ENCODE measurements at regions of chr7 and their contacts with region 1.

Region 1: GRCh38 chr7:137670199-137671071 is 176.3 kb downstream of the DGKI start:
- DNase-seq: peak; percentile 35
- ATAC-seq: peak; percentile 77
- H3K4me3 ChIP-seq: no peak overlapping the region
- H3K27ac ChIP-seq: no peak overlapping the region
- H3K4me1 ChIP-seq: 0 out of 2 replicates have a peak, but pooled peaks cover 2% of the 10 kb centered on the region
- H3K27me3 ChIP-seq: no peaks in the 10 kb centered on the region
- CTCF ChIP-seq: no peak
- EP300 ChIP-seq: no peak
- POLR2A ChIP-seq: no peak
- RAD21 ChIP-seq: peak; percentile 19; the same call in 1 of the 2 replicates

Region 2: DNA sequence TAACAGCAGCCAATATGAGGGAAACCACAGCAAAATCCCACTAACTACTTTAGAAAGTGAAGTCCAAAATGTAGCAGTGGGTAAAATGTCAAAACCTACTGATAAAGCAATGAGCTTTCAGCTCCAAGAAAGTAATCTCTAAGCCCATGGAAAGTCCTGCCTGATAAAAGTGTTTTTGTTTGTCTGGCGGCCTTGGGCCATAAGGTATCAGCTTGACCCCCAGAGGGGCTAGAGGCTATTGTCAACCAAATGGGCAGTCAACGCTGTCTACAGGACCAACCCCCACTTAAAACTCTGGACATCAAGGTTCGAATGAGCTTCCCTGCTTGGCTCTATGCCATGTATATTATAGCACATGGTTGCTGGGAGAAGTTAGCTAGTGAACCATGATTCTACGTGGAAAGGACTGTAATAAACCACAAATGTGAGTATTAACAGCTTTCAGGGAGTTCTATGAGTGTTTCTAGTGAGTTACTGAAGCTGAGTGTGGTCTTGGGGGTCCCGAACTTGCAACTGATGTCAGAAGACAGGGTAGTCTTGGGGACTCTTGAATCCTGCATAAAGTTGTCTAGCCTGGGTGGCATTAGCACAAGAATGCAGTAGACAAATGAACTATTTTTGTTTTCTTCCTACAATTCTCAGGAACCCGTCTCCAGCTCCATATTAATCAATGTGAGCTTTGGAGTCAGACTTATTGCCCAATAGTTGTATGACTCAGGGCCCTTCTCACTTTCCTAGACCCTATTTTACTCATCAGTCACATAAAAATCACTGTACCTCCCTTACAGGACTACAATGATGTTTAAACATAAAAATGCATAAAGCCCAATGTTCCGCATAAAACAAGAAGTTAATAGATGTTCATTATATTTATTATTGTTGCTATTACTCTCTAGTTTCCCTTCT is 11.5 kb after region 1 on chr7:
- CTCF ChIA-PET with region 1: interaction called, 5 read pairs
- POLR2A ChIA-PET with region 1: interaction called, 3 read pairs
- RAD21 ChIA-PET with region 1: interaction called, 4 read pairs
- SMC1A ChIA-PET with region 1: interaction called, 63 read pairs
- in situ Hi-C with region 1: no loop called
- intact Hi-C with region 1: no loop called
- DNase-seq: no peak
- ATAC-seq: no peak
- H3K4me3 ChIP-seq: no peak overlapping the region
- H3K27ac ChIP-seq: no peak overlapping the region
- H3K4me1 ChIP-seq: no peaks in the 10 kb centered on the region
- H3K27me3 ChIP-seq: no peaks in the 10 kb centered on the region
- CTCF ChIP-seq: no peak
- EP300 ChIP-seq: no peak
- POLR2A ChIP-seq: no peak
- RAD21 ChIP-seq: no peak

Region 3: DNA sequence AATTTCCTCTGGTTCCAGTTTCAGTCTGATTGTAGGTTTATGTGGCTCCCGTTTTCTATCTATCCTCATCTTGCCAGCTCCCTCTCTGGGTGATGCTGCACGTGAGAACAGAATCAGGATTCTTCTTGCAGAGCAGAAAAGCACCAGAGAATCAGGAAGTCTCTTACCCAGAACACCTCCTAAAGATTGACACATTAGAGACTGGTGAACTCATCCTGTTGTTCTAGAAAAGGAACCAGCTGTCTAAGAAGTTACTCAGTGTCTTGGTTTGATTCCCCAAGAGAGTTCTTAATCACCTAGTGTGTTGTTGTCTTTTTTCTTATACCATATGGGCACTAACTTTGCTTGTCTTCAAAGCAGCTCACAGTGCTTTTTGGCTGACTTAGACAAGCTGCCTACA is 24.0 kb after region 1 on chr7:
- CTCF ChIA-PET with region 1: interaction called, 10 read pairs
- POLR2A ChIA-PET with region 1: interaction called, 17 read pairs
- RAD21 ChIA-PET with region 1: interaction called, 30 read pairs
- SMC1A ChIA-PET with region 1: interaction called, 63 read pairs
- in situ Hi-C with region 1: no loop called
- intact Hi-C with region 1: no loop called
- DNase-seq: peak; percentile 17
- ATAC-seq: peak; percentile 91
- H3K4me3 ChIP-seq: no peak overlapping the region
- H3K27ac ChIP-seq: no peak overlapping the region
- H3K4me1 ChIP-seq: no peaks in the 10 kb centered on the region
- H3K27me3 ChIP-seq: no peaks in the 10 kb centered on the region
- CTCF ChIP-seq: no peak
- EP300 ChIP-seq: peak in 1 of 2 experiments; percentile 12; a peak in 1 of 4 replicates
- POLR2A ChIP-seq: no peak
- RAD21 ChIP-seq: no peak

Region 4: GRCh38 chr7:137742051-137742450 is 71.6 kb after region 1 on chr7:
- CTCF ChIA-PET with region 1: interaction called, 3 read pairs
- POLR2A ChIA-PET with region 1: interaction called, 3 read pairs
- RAD21 ChIA-PET with region 1: interaction called, 3 read pairs
- SMC1A ChIA-PET with region 1: interaction called, 19 read pairs
- in situ Hi-C with region 1: no loop called
- intact Hi-C with region 1: no loop called
- DNase-seq: no peak
- ATAC-seq: no peak
- H3K4me3 ChIP-seq: no peak overlapping the region
- H3K27ac ChIP-seq: no peak overlapping the region
- H3K4me1 ChIP-seq: no peaks in the 10 kb centered on the region
- H3K27me3 ChIP-seq: no peaks in the 10 kb centered on the region
- CTCF ChIP-seq: no peak
- EP300 ChIP-seq: no peak
- POLR2A ChIP-seq: no peak
- RAD21 ChIP-seq: no peak

Region 5: DNA sequence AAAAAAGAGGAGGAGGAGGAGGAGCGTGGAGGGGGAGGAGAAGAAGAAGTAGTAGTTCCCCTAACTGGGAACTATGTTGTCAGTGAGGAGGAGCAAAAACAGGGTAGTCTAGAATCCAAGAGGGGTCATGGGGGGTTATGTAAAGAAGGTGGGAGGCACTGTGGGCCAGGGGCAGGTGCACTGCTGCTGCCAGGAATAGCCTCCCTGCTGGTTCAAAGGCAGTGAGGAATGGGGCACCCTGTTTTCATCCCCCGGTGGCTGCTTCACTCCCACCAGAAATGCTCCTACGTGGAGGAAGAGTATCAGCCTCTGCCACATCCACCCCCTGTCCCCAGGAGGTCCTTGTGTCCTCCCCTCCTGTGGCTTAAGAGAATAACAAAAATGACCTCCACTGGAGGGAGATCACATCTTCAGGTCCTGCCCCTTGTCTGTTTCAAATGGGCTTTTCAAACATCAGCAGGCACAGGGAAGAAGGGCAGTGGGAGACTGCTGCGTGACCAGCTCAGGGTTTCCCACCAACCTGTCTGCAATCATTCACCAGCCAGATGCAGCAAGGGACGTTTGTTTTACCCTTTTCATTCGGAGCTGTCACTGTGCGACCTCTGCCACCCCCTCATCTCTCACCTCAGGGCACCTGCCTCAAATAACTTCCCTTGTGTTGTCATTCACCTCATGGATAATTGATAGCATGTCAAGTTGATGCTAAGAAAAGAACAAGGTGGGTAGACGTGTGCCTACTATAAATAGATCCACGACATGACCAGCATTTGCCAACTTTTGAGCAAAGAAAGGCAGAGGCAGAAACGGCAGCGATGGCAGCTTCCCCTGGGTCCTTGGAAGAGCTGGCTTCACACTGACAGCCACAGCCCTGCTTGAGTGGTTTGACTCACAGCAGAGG is 83.8 kb after region 1 on chr7:
- CTCF ChIA-PET with region 1: interaction called, 10 read pairs
- POLR2A ChIA-PET with region 1: interaction called, 12 read pairs
- RAD21 ChIA-PET with region 1: interaction called, 31 read pairs
- SMC1A ChIA-PET with region 1: interaction called, 69 read pairs
- in situ Hi-C with region 1: no loop called
- intact Hi-C with region 1: no loop called
- DNase-seq: peak; percentile 27
- ATAC-seq: peak; percentile 72
- H3K4me3 ChIP-seq: no peak overlapping the region
- H3K27ac ChIP-seq: no peak overlapping the region
- H3K4me1 ChIP-seq: no peaks in the 10 kb centered on the region; the same call in 1 of the 2 replicates
- H3K27me3 ChIP-seq: no peaks in the 10 kb centered on the region; a peak in 1 of 4 replicates
- CTCF ChIP-seq: no peak
- EP300 ChIP-seq: peak; percentile 76 to 92; a peak in 2 of 4 replicates
- POLR2A ChIP-seq: no peak
- RAD21 ChIP-seq: no peak; the same call in 1 of the 2 replicates

Region 6: GRCh38 chr7:137789215-137789882 is 118.9 kb after region 1 on chr7:
- CTCF ChIA-PET with region 1: no interaction called
- POLR2A ChIA-PET with region 1: interaction called, 3 read pairs
- RAD21 ChIA-PET with region 1: interaction called, 4 read pairs
- SMC1A ChIA-PET with region 1: interaction called, 12 read pairs
- in situ Hi-C with region 1: no loop called
- intact Hi-C with region 1: no loop called
- DNase-seq: no peak
- ATAC-seq: no peak
- H3K4me3 ChIP-seq: no peak overlapping the region
- H3K27ac ChIP-seq: no peak overlapping the region
- H3K4me1 ChIP-seq: no peaks in the 10 kb centered on the region
- H3K27me3 ChIP-seq: no peaks in the 10 kb centered on the region
- CTCF ChIP-seq: no peak
- EP300 ChIP-seq: no peak
- POLR2A ChIP-seq: no peak
- RAD21 ChIP-seq: no peak

Region 7: DNA sequence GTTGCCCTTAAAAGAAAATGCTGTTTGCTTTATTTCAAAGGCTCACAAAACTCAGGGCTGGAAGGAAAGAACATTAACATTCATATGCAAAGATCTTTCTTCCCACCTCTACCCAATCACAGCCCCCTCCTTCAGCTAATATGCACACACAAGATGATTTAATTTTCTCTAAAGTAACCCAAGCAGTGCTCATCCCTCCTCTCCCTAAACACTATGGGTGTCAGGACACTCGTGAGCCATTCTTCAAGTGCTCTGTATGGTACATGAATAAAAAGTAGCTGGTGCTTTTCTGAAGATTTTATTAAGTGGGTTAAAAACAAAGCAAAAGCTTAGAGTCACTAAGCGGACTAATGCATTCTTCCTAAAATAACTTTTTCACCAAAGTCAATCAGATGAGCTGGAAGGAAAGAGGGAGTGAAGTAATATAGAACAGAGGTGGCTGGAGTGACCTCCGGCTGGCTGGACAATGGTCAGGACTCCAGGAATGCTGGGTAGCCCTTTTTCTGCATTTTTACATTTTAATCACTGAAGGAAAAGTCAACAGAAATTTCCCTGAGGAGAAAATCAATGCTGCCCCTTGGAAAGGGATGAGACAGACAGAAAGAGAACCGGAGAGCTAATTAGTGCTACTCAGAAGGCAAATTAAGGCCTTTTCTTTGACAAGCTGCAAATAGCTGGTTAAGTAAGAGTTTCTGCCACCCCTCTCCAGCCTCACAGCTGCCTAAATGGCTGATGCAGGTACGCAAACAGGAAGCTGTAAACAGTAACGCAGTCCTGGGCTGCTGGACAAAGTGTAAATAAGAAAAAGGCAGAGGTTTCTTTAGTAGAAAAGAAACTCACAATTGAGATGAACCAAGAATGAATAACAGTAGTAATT is 169.7 kb after region 1 on chr7:
- CTCF ChIA-PET with region 1: interaction called, 4 read pairs
- POLR2A ChIA-PET with region 1: interaction called, 5 read pairs
- RAD21 ChIA-PET with region 1: interaction called, 7 read pairs
- SMC1A ChIA-PET with region 1: interaction called, 21 read pairs
- in situ Hi-C with region 1: no loop called
- intact Hi-C with region 1: no loop called
- DNase-seq: no peak
- ATAC-seq: 0 out of 3 replicates have a peak, but pooled peaks have one; percentile 11
- H3K4me3 ChIP-seq: no peak overlapping the region
- H3K27ac ChIP-seq: no peak overlapping the region
- H3K4me1 ChIP-seq: no peaks in the 10 kb centered on the region
- H3K27me3 ChIP-seq: peaks cover 0 to 2% of the 10 kb centered on the region in 2 experiments; a peak in 2 of 4 replicates
- CTCF ChIP-seq: no peak
- EP300 ChIP-seq: no peak
- POLR2A ChIP-seq: no peak
- RAD21 ChIP-seq: no peak